AG04449 (cell line): ENCODE measurements at regions of chr3 and their contacts with region 1.

Region 1: DNA sequence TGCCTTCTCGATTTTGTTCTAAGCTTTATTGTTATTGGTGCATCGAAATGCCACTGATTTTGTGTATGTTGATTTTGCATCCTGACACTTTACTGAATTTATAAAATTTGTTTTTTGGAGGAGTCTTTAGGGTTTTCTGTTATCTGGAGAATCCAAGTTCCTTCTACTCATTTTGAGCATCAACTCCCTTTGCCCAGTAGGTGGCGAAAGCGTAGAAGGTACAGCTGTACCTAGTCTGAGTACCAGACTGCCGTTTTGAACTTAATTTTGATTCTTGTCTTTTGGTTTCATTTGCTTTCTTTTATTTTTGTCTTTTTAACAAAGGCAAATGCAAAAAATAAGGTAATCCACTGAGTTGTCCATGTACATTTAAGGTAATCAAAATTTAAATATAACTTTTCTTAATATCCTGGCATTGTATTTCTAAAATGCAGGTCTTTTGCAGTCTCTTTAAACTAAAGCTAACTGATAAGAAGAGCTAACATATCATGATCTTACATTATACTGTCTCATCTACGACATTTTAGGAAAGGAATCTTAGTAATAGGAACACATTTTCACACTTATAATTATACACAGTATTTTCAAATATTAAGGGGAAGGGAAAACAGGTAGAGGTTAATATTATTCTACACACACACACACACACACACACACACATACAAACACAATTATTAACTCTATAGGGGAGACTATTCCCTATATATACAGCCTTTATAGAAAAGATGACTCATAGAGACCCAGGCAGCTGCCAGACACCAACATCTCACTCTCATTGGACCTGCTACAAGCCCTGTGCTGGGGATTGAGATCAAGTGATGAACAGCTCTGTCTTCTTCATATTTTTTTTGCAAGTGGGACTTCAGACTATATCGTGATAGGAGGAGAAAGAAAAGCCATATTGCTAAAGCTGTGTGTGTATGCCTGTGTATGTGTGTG is 71.7 kb downstream of the SYNPR start:
- DNase-seq: no peak
- H3K4me3 ChIP-seq: no peak overlapping the region
- CTCF ChIP-seq: peak; percentile 74

Region 2: DNA sequence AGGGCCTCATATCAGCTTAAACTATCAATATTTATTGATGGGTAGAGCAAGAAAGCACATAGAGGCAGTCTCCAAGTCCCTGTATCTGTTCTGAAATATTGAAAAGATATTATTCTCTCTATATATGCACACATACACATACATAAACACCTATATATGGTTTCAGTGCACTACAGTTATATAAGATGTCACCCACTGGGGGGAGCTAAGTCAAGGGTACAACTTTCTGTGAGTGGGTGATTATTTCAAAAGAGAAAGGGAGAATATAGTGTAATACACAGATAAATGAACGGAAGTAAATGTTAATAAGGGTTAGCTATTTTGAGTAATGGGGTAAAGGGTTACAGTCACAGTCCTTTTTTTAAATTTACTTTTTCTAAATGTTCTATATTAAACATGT is 311.4 kb after region 1 on chr3:
- CTCF ChIA-PET with region 1: interaction called, 116 read pairs
- POLR2A ChIA-PET with region 1: no interaction called
- DNase-seq: no peak
- H3K4me3 ChIP-seq: no peak overlapping the region
- CTCF ChIP-seq: peak; percentile 24

Region 3: GRCh38 chr3:63791974-63792545 is 442.2 kb after region 1 on chr3:
- CTCF ChIA-PET with region 1: interaction called, 91 read pairs
- POLR2A ChIA-PET with region 1: no interaction called
- DNase-seq: peak; percentile 17
- H3K4me3 ChIP-seq: no peak overlapping the region
- CTCF ChIP-seq: peak; percentile 32

Region 4: DNA sequence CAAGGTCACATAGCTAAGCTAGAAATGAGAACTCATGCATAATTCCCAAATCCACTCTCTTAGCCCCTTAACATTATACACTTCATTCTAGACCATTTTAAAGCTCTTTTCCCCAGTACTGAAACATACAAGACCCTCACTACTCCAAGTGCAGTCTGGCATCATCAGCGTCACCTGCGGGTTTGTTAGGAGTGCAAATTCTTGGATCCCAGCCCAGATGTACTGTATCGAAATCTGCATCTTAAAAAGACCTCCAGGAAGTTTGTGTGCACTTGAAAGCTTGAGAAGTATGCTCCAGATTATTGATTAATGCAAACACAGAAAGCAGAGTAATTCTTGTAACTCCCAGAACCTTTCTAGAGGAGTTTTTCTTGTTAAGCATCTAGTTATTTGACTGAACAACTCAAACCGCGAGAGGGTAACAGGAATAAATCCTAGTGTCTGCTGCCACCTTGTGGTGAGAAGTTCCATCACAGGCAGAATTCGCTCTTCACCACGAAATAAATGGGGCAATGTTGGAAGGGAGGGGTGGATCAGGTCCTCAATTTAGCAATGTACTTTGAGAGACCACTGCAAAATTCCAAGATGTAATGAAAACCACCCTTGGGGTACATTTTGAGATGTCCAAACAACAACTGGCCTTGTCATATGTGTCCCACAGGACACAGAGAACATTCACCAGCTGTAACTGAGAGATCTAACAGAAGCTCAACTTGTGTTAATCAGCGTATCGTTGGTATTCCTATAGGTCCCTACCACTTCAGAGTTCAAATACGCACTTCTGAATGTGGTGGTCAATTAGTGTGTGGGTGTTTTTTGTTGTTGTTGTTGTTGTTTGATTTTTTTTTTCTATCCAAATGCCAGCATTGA is 468.7 kb after region 1 on chr3:
- CTCF ChIA-PET with region 1: interaction called, 491 read pairs
- POLR2A ChIA-PET with region 1: no interaction called
- DNase-seq: no peak
- H3K4me3 ChIP-seq: no peak overlapping the region
- CTCF ChIP-seq: peak; percentile 75

Region 5: DNA sequence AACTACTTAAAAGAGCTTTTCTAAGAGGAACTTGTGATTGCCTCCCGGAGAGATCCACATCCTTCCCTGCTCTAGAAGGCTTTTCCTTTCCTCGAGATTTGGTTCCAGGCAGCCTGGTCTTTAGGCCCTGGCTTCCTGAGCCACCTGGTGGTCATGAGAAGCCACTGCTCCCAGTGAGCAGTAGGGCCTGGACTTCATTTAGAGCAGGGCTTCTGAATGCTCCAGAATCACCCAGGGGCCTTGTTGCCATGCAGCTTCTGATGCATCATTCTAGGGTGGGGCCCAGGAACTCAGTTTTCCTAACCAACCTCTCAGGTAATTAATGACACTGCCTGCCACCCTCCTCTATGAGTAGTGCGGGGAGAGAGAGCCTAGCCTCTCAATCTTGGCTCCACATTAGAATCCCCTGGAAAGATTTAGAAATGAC is 643.8 kb after region 1 on chr3:
- CTCF ChIA-PET with region 1: interaction called, 53 read pairs
- POLR2A ChIA-PET with region 1: no interaction called
- DNase-seq: peak; percentile 23
- H3K4me3 ChIP-seq: no peak overlapping the region
- CTCF ChIP-seq: peak; percentile 92